Activated B cell treated with CpG ODN at 0.5 μM for 24 hours (primary cell): ENCODE measurements at regions of chr6 and their contacts with region 1.

Region 1: DNA sequence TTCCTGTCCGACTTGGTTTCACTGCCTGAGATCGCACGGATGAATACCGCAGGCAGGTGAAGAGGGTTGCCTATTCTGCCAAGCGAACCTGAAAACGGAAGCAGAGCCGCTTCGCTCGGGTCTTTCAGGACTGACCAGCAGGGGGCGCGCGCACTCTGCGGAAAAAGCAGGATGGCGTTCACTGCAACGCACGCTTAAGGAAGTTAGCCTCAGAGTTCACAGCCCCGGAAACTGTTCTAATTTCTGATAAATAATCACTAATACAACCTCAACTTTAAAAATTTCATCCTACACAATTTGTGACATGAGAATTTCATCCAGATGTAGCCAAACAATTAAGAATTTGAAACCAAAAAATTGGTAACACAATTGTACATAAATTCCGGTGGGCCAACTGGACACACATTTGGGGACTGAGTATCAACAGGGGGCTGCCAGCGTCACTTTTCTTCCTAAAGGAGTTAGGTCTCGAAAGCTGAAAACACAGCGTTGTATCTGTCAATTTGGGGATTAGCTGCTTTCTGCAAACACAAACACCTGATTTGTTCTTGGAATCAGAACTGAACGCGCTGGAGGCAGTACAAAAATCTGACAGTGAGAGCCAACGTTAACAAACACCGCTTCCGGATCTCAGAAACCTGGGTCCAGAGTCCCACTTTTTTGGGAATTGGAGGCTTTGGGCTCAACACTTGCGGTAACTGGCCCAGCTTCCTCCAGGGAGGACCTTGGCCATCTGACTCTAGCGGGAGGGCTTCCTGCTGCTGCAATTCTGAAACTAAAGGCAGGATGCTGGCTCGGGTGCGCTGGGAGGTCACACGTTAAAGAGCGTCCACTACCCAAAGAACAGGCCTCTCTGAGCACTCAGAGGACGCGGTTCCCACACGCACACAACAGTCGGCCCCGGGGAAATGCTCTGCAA is 8.8 kb downstream of the PXDC1 start:
- DNase-seq: peak; percentile 88
- ATAC-seq: peak; percentile 26
- H3K4me3 Mint-ChIP-seq: peak overlapping the region; percentile 59
- H3K27ac Mint-ChIP-seq: peak overlapping the region; percentile 76
- H3K4me1 Mint-ChIP-seq: peaks cover 48% of the 10 kb centered on the region
- H3K27me3 Mint-ChIP-seq: no peaks in the 10 kb centered on the region
- CTCF ChIP-seq: peak; percentile 55

Region 2: GRCh38 chr6:3075522-3076113 is 667.1 kb before region 1 on chr6:
- CTCF ChIA-PET with region 1: no interaction called
- POLR2A ChIA-PET with region 1: no interaction called
- intact Hi-C with region 1: no loop called
- DNase-seq: no peak
- ATAC-seq: peak; percentile 18
- H3K4me3 Mint-ChIP-seq: no peak overlapping the region
- H3K27ac Mint-ChIP-seq: peak overlapping the region; percentile 38
- H3K4me1 Mint-ChIP-seq: peaks cover 35% of the 10 kb centered on the region
- H3K27me3 Mint-ChIP-seq: no peaks in the 10 kb centered on the region
- CTCF ChIP-seq: no peak

Region 3: DNA sequence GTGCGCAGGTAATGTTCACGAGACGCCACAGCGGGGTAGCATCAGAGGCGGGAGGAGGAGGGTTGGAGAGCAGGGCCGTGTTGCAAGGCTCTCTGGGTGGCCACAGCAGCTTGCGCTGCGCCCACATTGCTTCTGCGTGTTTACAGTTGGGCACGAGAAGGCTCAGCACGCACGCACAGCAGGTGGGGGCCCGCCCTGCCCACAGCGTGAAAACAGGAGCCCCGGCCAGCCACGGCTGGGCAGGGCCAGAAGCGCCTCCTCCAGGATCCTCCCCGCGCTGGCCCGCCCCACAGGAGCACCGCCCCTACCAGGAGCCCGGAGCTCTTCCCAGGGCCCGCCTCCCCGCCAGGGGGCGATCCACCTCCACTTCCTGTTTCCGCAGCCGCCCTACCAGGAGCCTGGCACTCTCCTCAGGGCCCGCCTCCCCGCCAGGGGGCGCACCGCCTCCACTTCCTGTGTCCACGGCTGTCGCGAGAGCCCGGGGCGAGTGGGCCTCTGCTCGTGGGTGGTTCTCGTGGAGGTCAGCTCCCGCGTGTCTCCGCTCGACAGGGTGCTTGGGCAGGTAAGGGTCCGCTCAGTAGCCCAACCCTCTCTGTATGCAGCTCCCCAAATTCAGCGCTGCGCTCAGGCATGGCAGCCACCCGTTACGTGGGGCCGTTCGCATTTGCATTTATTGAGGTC is 106.4 kb after region 1 on chr6 and contains the start of gene FAM50B:
- CTCF ChIA-PET with region 1: interaction called, 18 read pairs
- POLR2A ChIA-PET with region 1: interaction called, 23 read pairs
- intact Hi-C with region 1: loop called (anchors 1 kb)
- DNase-seq: peak; percentile 86
- ATAC-seq: peak; percentile 95
- H3K4me3 Mint-ChIP-seq: peak within 1 kb of the TSS; percentile 80
- H3K27ac Mint-ChIP-seq: peak within 1 kb of the TSS; percentile 80
- H3K4me1 Mint-ChIP-seq: peaks cover 22% of the 10 kb centered on the region
- H3K27me3 Mint-ChIP-seq: no peaks in the 10 kb centered on the region
- CTCF ChIP-seq: peak; percentile 63
- total RNA-seq, gene FAM50B: 7.6 and 8.1 TPM in 2 replicates

Region 4: GRCh38 chr6:3977875-3978711 is 235.4 kb after region 1 on chr6:
- CTCF ChIA-PET with region 1: interaction called, 38 read pairs
- POLR2A ChIA-PET with region 1: interaction called, 3 read pairs
- intact Hi-C with region 1: loop called (anchors 1 kb)
- DNase-seq: no peak
- ATAC-seq: peak; percentile 96
- H3K4me3 Mint-ChIP-seq: no peak overlapping the region
- H3K27ac Mint-ChIP-seq: no peak overlapping the region
- H3K4me1 Mint-ChIP-seq: peaks cover 5% of the 10 kb centered on the region
- H3K27me3 Mint-ChIP-seq: peaks cover 4% of the 10 kb centered on the region
- CTCF ChIP-seq: no peak

Region 5: DNA sequence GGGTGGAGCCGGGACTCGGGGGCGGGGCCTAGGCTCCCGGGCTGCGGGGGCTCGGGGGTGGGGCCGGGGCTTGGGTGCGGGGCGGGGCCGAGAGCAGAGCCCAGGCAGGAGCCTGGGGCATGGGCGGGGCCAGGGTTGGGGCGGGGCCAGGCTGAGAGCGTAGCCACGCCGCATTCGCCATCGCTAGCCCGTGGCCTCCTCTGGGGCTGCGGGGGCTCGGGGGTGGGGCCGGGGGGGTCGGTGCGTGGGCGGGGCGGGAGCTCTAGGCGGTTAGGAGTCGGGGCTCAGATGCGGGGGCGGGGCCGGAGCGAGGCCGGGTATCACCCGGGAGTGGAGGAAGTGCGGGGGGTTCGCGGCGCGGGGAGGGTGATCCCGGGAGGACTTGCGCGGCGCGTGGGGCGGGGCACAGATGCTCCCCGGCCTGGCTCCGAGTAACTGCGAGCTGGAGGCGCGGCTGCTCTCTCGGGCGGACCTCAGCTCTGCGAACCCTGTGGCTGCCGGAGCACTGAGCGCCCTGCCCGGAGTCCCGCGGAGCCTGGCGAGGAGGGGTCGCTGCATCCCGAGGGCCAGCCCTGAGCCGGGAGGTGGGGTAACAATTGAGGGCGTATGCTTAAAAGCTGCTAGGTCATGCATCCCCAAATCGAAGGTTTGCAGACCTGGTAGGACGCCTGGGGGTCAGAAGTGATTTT is 393.1 kb after region 1 on chr6:
- CTCF ChIA-PET with region 1: no interaction called
- POLR2A ChIA-PET with region 1: no interaction called
- intact Hi-C with region 1: loop called (anchors 1 kb)
- DNase-seq: peak; percentile 83
- ATAC-seq: peak; percentile 92
- H3K4me3 Mint-ChIP-seq: peak overlapping the region; percentile 85
- H3K27ac Mint-ChIP-seq: peak overlapping the region; percentile 76
- H3K4me1 Mint-ChIP-seq: peaks cover 27% of the 10 kb centered on the region
- H3K27me3 Mint-ChIP-seq: no peaks in the 10 kb centered on the region
- CTCF ChIP-seq: no peak

Region 6: DNA sequence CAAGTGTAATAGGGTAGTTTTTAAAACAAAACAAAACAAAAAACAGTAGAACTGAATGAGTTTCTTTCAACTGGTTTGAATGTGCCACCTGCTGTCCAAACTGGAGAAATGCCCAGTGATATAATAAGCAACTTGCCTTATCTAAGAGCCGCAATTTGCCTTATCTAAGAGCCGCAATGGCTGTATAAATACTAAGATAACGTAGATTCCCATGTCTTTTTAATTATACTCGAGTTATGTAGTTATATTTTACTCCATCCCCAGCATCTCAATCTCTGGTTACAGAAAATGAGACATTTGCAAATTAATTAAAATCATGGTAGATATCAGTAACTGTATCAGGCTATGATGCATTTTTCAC is 1194.0 kb after region 1 on chr6:
- CTCF ChIA-PET with region 1: no interaction called
- POLR2A ChIA-PET with region 1: no interaction called
- intact Hi-C with region 1: loop called (anchors 10 kb)
- DNase-seq: no peak
- ATAC-seq: peak; percentile 50
- H3K4me3 Mint-ChIP-seq: no peak overlapping the region
- H3K27ac Mint-ChIP-seq: no peak overlapping the region
- H3K4me1 Mint-ChIP-seq: peaks cover 20% of the 10 kb centered on the region
- H3K27me3 Mint-ChIP-seq: no peaks in the 10 kb centered on the region
- CTCF ChIP-seq: no peak